ENCODE measurements at regions of chr7 and their contacts with region 1.

Region 1: DNA sequence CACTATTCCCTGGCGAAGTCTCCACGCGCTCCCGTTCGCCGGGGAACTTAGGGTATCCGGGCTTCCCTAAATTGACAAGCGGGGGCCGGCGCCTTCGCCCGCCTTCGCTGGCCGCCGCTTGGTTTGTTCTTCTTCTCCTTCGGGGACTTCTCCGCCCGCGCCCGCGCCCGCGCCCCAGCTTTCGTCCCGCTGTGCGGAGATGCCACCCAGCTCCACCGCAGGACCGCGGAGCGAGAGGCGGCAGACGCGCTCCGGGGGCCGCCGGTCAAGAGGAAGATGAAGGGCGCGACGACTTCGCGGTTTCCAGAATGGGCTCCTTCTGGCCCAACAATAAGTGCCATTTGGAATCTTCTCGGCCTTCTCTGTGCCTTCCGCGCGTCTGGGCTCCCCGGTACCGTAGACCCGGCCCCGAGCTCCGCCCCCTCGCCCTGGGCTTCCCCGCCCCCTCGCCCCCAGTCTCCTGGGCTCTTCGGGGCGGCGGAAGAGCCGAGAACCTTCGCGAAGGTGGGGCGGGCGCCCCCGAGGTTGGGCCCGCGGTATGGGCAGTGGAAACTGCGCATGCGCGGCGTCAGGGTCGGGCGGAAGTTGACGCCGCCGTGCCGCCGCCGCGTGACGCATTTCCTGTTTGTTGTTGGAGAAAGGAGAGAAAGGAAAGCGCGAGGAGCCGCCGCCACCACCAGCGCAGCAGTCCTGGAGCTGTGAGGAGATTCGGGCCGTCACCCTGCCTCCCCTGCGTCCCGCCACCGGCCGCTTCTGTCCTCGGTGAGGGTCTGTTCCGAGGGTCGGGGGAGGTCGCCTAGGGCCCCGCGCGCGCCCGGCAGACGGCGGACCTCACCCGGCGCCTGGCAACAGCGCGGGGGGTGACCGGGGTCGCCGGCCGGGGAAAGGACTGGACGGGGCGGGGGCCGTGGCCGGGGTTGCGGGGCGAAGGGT is at the start of gene DNAJB6:
- DNase-seq: peak; percentile 91
- ATAC-seq: peak; percentile 56
- H3K4me3 ChIP-seq: peak within 1 kb of the TSS; percentile 88
- H3K27ac ChIP-seq: peak within 1 kb of the TSS; percentile 75
- H3K4me1 ChIP-seq: peaks cover 14% of the 10 kb centered on the region; the same call in 1 of the 2 replicates
- H3K27me3 ChIP-seq: no peaks in the 10 kb centered on the region
- CTCF ChIP-seq: no peak
- total RNA-seq, gene DNAJB6: 119 and 151 TPM in 2 replicates

Region 2: GRCh38 chr7:157138424-157139110 is 198.1 kb before region 1 on chr7 and contains the start of gene UBE3C:
- CTCF ChIA-PET with region 1: no interaction called
- POLR2A ChIA-PET with region 1: no interaction called
- intact Hi-C with region 1: loop called (anchors 10 kb)
- DNase-seq: peak; percentile 88
- ATAC-seq: peak; percentile 84
- H3K4me3 ChIP-seq: peak within 1 kb of the TSS; percentile 93
- H3K27ac ChIP-seq: peak within 1 kb of the TSS; percentile 58
- H3K4me1 ChIP-seq: peaks cover 31% of the 10 kb centered on the region
- H3K27me3 ChIP-seq: no peaks in the 10 kb centered on the region
- CTCF ChIP-seq: no peak
- total RNA-seq, gene UBE3C: 83.1 and 86.6 TPM in 2 replicates

Region 3: GRCh38 chr7:157282141-157282801 is 54.4 kb before region 1 on chr7:
- CTCF ChIA-PET with region 1: no interaction called
- POLR2A ChIA-PET with region 1: no interaction called
- intact Hi-C with region 1: loop called (anchors 1 kb)
- DNase-seq: peak; percentile 82
- ATAC-seq: peak; percentile 75
- H3K4me3 ChIP-seq: peak overlapping the region; percentile 58
- H3K27ac ChIP-seq: peak overlapping the region; percentile 84
- H3K4me1 ChIP-seq: peaks cover 31% of the 10 kb centered on the region
- H3K27me3 ChIP-seq: no peaks in the 10 kb centered on the region
- CTCF ChIP-seq: no peak

Region 4: GRCh38 chr7:157309990-157310668 is 26.5 kb before region 1 on chr7:
- CTCF ChIA-PET with region 1: interaction called, 3 read pairs
- POLR2A ChIA-PET with region 1: no interaction called
- intact Hi-C with region 1: loop called (anchors 1 kb)
- DNase-seq: peak; percentile 97
- ATAC-seq: peak; percentile 88
- H3K4me3 ChIP-seq: peak overlapping the region; percentile 42
- H3K27ac ChIP-seq: peak overlapping the region; percentile 99
- H3K4me1 ChIP-seq: peaks cover 25% of the 10 kb centered on the region
- H3K27me3 ChIP-seq: no peaks in the 10 kb centered on the region
- CTCF ChIP-seq: no peak

Region 5: GRCh38 chr7:157323419-157323818 is 13.2 kb before region 1 on chr7:
- CTCF ChIA-PET with region 1: interaction called, 6 read pairs
- POLR2A ChIA-PET with region 1: interaction called, 5 read pairs
- intact Hi-C with region 1: loop called (anchors 1 kb)
- DNase-seq: no peak
- ATAC-seq: no peak
- H3K4me3 ChIP-seq: no peak overlapping the region
- H3K27ac ChIP-seq: no peak overlapping the region
- H3K4me1 ChIP-seq: peaks cover 4% of the 10 kb centered on the region
- H3K27me3 ChIP-seq: no peaks in the 10 kb centered on the region
- CTCF ChIP-seq: no peak

Measured in PC-3 (cell line).